Activated CD4-positive, alpha-beta T cell treated with anti-CD3 and anti-CD28 coated beads for 36 hours (primary cell): ENCODE measurements at regions of chr3 and their contacts with region 1.

Region 1: DNA sequence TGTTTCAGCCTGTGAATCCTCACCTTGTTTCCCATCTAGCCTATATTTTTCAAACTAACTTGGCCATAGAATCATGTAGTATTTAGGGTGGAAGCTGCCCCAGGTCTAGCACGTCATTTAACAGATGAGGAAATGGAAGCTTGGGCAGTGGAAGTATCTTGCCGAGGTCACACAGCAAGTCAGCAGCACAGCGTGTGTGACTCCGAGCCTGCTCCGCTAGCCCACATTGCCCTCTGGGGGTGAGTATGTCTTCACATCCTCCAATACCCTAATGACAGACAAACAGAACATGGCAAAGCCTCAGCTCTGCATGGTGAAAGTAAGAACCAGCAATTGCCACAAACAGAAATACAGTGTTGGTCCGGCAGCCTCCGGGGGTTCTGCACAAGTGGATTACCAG is 2.2 kb upstream of the CCR5 start:
- DNase-seq: peak; percentile 65
- ATAC-seq: peak; percentile 22
- H3K4me3 Mint-ChIP-seq: no peak overlapping the region
- H3K27ac Mint-ChIP-seq: peak overlapping the region; percentile 32
- H3K4me1 Mint-ChIP-seq: peaks cover 36% of the 10 kb centered on the region
- H3K27me3 Mint-ChIP-seq: peaks cover 47% of the 10 kb centered on the region

Region 2: GRCh38 chr3:45864760-45865519 is 503.6 kb before region 1 on chr3:
- CTCF ChIA-PET with region 1: no interaction called
- POLR2A ChIA-PET with region 1: no interaction called
- intact Hi-C with region 1: loop called (anchors 2 to 10 kb)
- DNase-seq: peak; percentile 55
- ATAC-seq: peak; percentile 71
- H3K4me3 Mint-ChIP-seq: no peak overlapping the region
- H3K27ac Mint-ChIP-seq: no peak overlapping the region
- H3K4me1 Mint-ChIP-seq: peaks cover 46% of the 10 kb centered on the region
- H3K27me3 Mint-ChIP-seq: peaks cover 52% of the 10 kb centered on the region

Region 3: GRCh38 chr3:46078712-46079400 is 289.7 kb before region 1 on chr3:
- CTCF ChIA-PET with region 1: interaction called, 37 read pairs
- POLR2A ChIA-PET with region 1: no interaction called
- intact Hi-C with region 1: no loop called
- DNase-seq: peak; percentile 93
- ATAC-seq: peak; percentile 98
- H3K4me3 Mint-ChIP-seq: no peak overlapping the region
- H3K27ac Mint-ChIP-seq: no peak overlapping the region
- H3K4me1 Mint-ChIP-seq: peaks cover 3% of the 10 kb centered on the region
- H3K27me3 Mint-ChIP-seq: peaks cover 23% of the 10 kb centered on the region

Region 4: GRCh38 chr3:46208167-46208704 is 160.3 kb before region 1 on chr3 and contains the start of gene CCR1:
- CTCF ChIA-PET with region 1: interaction called, 19 read pairs
- POLR2A ChIA-PET with region 1: no interaction called
- intact Hi-C with region 1: loop called in 1 of 2 experiments (anchors 2 kb)
- DNase-seq: peak; percentile 77
- ATAC-seq: peak; percentile 73
- H3K4me3 Mint-ChIP-seq: no peak within 1 kb of the TSS
- H3K27ac Mint-ChIP-seq: no peak within 1 kb of the TSS
- H3K4me1 Mint-ChIP-seq: peaks cover 16% of the 10 kb centered on the region
- H3K27me3 Mint-ChIP-seq: peaks cover 2% of the 10 kb centered on the region
- total RNA-seq, gene CCR1: 0.14 to 0.16 TPM

Region 5: GRCh38 chr3:46276502-46277099 is 92.0 kb before region 1 on chr3:
- CTCF ChIA-PET with region 1: interaction called, 49 read pairs
- POLR2A ChIA-PET with region 1: interaction called, 6 read pairs
- intact Hi-C with region 1: loop called (anchors 1 kb)
- DNase-seq: peak; percentile 86
- ATAC-seq: peak; percentile 81
- H3K4me3 Mint-ChIP-seq: no peak overlapping the region
- H3K27ac Mint-ChIP-seq: no peak overlapping the region
- H3K4me1 Mint-ChIP-seq: peaks cover 33% of the 10 kb centered on the region
- H3K27me3 Mint-ChIP-seq: peaks cover 31% of the 10 kb centered on the region

Region 6: DNA sequence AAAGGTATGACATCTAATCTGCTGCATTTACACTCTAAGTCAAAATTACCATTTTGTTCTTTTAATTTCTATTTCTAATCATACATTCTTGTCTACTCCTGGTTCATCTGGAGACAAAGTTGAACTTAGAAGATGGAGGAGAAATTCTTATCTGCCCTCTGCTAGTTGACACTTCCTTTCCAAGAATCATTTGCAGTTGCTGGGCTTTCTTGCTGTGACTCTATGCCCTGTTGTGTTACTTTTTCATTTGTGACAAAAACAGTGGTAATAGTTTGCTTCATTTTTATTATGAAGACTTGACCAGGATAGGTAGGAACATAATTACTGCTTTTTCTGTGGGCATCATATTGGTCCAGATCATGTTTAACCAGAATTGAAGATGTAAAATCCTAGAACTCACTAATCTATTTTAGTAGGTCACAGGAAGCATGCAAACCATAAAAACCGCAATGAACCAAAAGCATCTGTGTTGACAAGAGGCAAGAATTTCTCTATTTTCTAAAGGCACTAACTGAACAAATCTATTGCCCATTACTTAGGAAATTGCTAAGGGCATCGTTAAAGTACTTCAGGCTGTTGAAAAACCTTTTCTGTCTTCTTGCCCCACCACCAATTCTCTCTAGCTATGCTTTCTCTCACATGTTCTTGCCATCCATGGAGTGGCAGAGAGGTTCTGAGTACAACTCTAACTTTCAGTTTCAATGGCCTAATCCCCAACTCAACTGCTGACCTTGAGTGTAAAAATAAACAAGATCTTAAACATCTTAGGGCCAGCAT is 18.9 kb before region 1 on chr3:
- CTCF ChIA-PET with region 1: interaction called, 19 read pairs
- POLR2A ChIA-PET with region 1: interaction called, 4 read pairs
- intact Hi-C with region 1: loop called in 1 of 2 experiments (anchors 2 kb)
- DNase-seq: no peak
- ATAC-seq: no peak
- H3K4me3 Mint-ChIP-seq: no peak overlapping the region
- H3K27ac Mint-ChIP-seq: no peak overlapping the region
- H3K4me1 Mint-ChIP-seq: peaks cover 47% of the 10 kb centered on the region
- H3K27me3 Mint-ChIP-seq: peaks cover 28% of the 10 kb centered on the region

Region 7: GRCh38 chr3:46965151-46965550 is 596.6 kb after region 1 on chr3:
- CTCF ChIA-PET with region 1: no interaction called
- POLR2A ChIA-PET with region 1: no interaction called
- intact Hi-C with region 1: no loop called
- DNase-seq: peak; percentile 48
- ATAC-seq: peak; percentile 45
- H3K4me3 Mint-ChIP-seq: no peak overlapping the region
- H3K27ac Mint-ChIP-seq: no peak overlapping the region
- H3K4me1 Mint-ChIP-seq: peaks cover 84% of the 10 kb centered on the region
- H3K27me3 Mint-ChIP-seq: no peaks in the 10 kb centered on the region